AG04449 (cell line): ENCODE measurements at regions of chr17 and their contacts with region 1.

Region 1: DNA sequence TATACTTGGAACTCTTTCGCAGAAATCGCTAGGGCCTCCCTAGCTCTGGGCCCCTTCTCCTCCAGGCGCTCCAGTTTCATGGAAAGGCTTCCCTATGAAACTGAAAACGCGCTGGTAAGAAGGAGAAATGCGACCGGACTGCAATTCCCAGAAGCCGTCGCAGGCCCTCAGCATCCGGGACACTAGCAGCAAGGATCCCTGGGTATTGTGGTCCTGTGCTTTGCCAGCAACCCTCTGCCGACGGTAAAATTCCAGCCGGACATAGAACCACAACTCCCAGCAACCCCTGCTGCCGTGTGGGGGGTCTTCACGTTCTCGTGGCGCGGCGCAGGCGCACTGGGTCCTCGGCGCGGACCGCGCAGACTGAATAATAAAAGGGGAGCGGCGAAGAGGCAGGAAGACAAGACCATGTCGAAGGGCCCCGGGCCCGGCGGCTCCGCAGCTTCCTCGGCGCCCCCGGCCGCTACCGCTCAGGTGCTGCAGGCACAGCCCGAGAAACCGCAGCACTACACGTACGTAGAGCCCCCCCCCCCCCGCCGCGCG is at the start of gene UNK:
- DNase-seq: peak; percentile 98
- H3K4me3 ChIP-seq: peak within 1 kb of the TSS; percentile 79
- CTCF ChIP-seq: no peak

Region 2: DNA sequence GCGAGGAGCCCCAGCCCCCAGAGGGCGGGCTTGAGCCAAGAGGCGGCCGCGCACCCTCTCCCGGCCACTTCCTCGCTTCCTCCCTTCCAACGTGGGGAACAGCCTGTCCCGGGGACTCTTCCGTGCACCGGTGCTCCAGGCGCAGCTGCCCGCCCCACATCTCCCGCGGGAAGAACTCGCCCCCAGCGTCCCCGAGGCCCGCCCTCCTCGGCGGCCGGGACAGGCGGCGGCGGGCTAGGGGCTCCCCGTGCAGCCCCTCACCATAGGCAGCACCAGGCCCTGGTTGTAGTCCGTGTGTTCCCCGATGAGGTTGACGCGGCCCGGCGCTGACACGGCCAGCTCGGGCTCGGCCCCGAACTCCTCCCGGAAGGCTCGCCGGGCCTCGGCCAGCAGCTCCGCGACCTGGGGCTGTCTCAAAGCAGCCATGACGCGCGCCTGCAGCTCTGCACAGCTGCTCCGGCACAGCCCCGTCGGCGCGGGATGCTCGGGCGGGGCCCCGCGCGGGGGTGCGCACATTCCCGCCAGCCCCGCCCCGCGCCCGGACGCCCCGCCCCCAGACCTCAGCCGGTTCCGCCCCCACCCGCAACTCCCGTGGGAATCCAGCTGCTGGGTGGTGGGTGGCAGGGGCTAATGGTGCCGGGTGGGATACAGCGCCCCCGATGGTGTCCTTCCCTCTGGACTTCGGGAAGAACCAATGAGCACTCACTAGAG is 19.7 kb before region 1 on chr17 and contains the start of gene GALK1:
- CTCF ChIA-PET with region 1: interaction called, 25 read pairs
- POLR2A ChIA-PET with region 1: interaction called, 33 read pairs
- DNase-seq: no peak
- H3K4me3 ChIP-seq: peak within 1 kb of the TSS; percentile 66
- CTCF ChIP-seq: peak; percentile 77

Region 3: DNA sequence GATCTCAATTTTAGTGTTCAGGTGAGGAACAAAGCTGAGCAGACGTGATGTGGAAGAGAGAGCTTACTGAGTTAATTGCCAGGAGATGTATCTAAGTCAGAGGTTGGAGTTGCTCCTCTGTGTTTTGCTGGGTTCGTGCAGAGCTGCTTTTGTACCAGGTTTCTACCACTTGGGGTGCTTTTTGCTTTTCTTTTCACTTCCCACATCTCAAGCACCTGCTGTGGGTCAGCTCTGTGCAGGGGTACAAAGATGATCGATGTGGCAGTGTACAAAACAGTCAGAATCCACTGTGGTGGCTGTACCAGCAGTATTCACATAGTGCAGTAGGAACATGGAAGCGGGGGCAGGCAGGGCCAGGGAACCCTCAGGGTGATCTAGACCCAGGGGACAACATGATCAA is 14.9 kb after region 1 on chr17:
- CTCF ChIA-PET with region 1: interaction called, 14 read pairs
- POLR2A ChIA-PET with region 1: interaction called, 3 read pairs
- DNase-seq: no peak
- H3K4me3 ChIP-seq: no peak overlapping the region
- CTCF ChIP-seq: no peak

Region 4: GRCh38 chr17:75808905-75809715 is 24.6 kb after region 1 on chr17:
- CTCF ChIA-PET with region 1: interaction called, 11 read pairs
- POLR2A ChIA-PET with region 1: interaction called, 5 read pairs
- DNase-seq: no peak
- H3K4me3 ChIP-seq: no peak overlapping the region
- CTCF ChIP-seq: no peak